Activated B cell treated with CpG ODN at 0.5 μM for 24 hours (primary cell): ENCODE measurements at regions of chr11 and their contacts with region 1.

Region 1: DNA sequence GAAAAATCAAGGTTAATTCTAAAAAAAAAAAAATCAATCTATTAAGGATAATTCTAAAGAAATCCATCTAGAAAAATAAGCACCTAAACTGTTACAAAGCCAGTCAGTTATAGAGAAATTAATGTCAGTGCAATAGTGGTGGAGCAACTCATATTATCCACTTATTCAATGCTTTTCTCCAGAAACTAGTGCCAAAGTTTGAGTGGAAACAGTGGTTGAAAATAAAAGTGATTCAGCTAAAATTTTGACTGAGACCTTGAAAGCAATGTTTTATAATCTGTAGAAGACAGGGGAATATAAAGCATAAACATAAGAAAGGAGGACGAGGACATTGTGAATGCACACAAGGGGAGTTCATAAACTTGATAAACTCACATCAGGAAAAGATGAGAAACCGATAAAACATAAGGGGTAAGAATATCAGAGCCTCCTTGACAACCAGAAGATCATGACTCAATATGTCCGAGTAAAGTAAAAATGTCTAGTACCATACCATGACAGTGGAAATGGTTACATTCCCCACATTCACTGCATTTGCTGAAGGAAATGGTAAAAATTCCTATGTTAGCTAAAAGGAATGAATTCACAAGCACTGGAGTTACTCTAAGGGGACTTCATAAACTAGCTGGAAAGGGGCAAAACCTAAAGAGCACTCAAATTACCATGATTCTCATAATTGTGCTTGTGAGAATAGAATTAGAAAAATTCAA is 58.7 kb upstream of the SLC5A12 start:
- DNase-seq: no peak
- ATAC-seq: no peak
- H3K4me3 Mint-ChIP-seq: no peak overlapping the region
- H3K27ac Mint-ChIP-seq: no peak overlapping the region
- H3K4me1 Mint-ChIP-seq: no peaks in the 10 kb centered on the region
- H3K27me3 Mint-ChIP-seq: no peaks in the 10 kb centered on the region
- CTCF ChIP-seq: no peak

Region 2: GRCh38 chr11:25317216-25317615 is 1463.3 kb before region 1 on chr11:
- CTCF ChIA-PET with region 1: no interaction called
- POLR2A ChIA-PET with region 1: no interaction called
- intact Hi-C with region 1: loop called (anchors 5 kb)
- DNase-seq: no peak
- ATAC-seq: no peak
- H3K4me3 Mint-ChIP-seq: no peak overlapping the region
- H3K27ac Mint-ChIP-seq: no peak overlapping the region
- H3K4me1 Mint-ChIP-seq: no peaks in the 10 kb centered on the region
- H3K27me3 Mint-ChIP-seq: no peaks in the 10 kb centered on the region
- CTCF ChIP-seq: no peak

Region 3: DNA sequence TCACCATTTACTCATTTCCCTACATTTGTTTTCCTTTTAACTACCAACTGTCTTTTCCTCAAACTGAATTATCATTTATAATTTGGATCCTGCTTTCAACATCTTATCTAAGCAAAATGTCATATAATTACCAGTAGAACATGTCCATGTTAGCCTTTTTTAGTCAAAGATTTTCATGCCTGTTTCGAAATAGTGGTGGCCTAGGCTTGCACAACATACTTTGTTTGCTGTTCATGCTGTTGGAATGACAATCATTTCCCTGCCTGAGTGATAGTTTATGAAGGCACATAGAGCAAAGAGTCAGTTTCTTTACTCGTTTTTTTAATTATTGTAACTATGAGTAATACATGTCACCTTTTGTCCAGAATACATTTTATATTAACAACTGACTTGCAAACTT is 592.9 kb before region 1 on chr11:
- CTCF ChIA-PET with region 1: no interaction called
- POLR2A ChIA-PET with region 1: no interaction called
- intact Hi-C with region 1: no loop called
- DNase-seq: no peak
- ATAC-seq: no peak
- H3K4me3 Mint-ChIP-seq: no peak overlapping the region
- H3K27ac Mint-ChIP-seq: no peak overlapping the region
- H3K4me1 Mint-ChIP-seq: peaks cover 10% of the 10 kb centered on the region
- H3K27me3 Mint-ChIP-seq: no peaks in the 10 kb centered on the region
- CTCF ChIP-seq: no peak

Region 4: DNA sequence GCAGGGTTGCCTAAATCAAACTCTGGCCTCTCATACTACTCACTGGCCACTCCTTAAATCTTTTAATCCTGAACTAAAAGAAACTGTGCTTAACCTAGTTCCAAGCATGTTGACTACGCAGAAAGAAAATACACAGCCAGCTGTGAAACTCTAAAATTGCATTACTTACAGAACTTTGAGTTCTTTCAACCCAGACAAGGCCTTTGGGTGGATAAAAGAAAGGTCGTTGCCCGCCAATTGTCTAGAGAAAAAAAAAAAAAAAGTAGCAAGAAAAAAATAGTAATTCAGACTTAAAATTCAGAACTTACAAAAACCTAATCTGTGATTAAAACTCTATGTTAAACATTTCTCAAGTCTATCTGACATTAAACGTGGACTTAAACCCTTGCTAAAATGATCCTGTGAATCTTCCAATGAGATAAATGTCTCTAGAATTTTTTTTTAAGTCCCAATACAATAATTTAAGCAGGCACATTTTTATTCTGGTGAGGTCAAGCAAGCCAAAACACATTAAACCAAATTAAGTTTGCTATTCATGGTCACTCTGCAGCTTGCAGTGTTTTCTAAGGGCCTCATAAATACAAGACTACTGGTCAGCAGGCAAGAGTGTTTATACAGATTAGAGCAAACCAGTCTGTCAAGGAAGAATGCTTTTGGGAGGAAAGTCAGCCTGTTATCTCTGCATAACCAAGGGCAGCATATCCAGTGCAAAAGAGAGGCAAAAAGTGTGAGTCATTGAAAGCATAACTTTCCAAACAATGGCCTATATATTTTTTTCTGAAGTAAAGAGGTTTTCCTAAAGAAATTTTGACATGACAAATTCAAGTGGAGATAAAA is 612.0 kb after region 1 on chr11:
- CTCF ChIA-PET with region 1: no interaction called
- POLR2A ChIA-PET with region 1: no interaction called
- intact Hi-C with region 1: no loop called
- DNase-seq: no peak
- ATAC-seq: no peak
- H3K4me3 Mint-ChIP-seq: no peak overlapping the region
- H3K27ac Mint-ChIP-seq: no peak overlapping the region
- H3K4me1 Mint-ChIP-seq: no peaks in the 10 kb centered on the region
- H3K27me3 Mint-ChIP-seq: no peaks in the 10 kb centered on the region
- CTCF ChIP-seq: no peak